Activated T-helper 2 cell treated with anti-CD3 and anti-CD28 coated beads, Interferon-gamma antibody, Interleukin-2, Interleukin-4, amounts not matched to agents 10 μg/mL and 5 μg/mL and 100 μg/mL, durations not matched to agents 14 hours and 24 hours and 36 hours (primary cell): ENCODE measurements at regions of chr1 and their contacts with region 1.

Region 1: DNA sequence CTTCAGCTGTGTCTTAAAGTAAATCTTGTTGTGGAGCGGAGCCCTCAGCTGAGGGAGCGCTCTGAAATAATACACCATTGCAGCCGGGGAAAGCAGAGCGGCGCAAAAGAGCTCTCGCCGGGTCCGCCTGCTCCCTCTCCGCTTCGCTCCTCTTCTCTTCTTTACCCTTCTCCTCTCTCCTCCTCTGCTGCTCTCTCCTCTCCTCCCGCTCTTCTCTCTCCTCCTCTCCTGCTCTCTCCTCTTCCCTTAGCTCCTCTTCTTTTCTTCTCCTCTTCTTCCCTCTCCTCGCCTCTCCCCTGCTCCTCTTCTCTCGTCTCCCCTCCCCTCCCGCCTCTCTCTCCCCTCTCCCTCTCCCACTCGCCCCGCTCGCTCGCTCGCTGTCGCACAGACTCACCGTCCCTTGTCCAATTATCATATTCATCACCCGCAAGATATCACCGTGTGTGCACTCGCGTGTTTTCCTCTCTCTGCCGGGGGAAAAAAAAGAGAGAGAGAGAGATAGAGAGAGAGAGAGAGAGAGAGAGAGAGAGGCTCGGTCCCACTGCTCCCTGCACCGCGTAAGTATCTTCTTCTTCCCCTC is at the start of gene PROX1:
- DNase-seq: peak; percentile 48
- H3K4me3 Mint-ChIP-seq: peak within 1 kb of the TSS; percentile 89
- H3K27ac Mint-ChIP-seq: peak within 1 kb of the TSS; percentile 44
- H3K4me1 Mint-ChIP-seq: peaks cover 25% of the 10 kb centered on the region
- H3K27me3 Mint-ChIP-seq: peaks cover 94% of the 10 kb centered on the region
- total RNA-seq, gene PROX1: not detected in 2 replicates

Region 2: GRCh38 chr1:214187121-214187900 is 199.3 kb after region 1 on chr1:
- intact Hi-C with region 1: loop called (anchors 2 kb)
- DNase-seq: no peak
- H3K4me3 Mint-ChIP-seq: no peak overlapping the region
- H3K27ac Mint-ChIP-seq: no peak overlapping the region
- H3K4me1 Mint-ChIP-seq: peaks cover 3% of the 10 kb centered on the region
- H3K27me3 Mint-ChIP-seq: peaks cover 63% of the 10 kb centered on the region